ENCODE measurements at regions of chr9 and their contacts with region 1.

Region 1: DNA sequence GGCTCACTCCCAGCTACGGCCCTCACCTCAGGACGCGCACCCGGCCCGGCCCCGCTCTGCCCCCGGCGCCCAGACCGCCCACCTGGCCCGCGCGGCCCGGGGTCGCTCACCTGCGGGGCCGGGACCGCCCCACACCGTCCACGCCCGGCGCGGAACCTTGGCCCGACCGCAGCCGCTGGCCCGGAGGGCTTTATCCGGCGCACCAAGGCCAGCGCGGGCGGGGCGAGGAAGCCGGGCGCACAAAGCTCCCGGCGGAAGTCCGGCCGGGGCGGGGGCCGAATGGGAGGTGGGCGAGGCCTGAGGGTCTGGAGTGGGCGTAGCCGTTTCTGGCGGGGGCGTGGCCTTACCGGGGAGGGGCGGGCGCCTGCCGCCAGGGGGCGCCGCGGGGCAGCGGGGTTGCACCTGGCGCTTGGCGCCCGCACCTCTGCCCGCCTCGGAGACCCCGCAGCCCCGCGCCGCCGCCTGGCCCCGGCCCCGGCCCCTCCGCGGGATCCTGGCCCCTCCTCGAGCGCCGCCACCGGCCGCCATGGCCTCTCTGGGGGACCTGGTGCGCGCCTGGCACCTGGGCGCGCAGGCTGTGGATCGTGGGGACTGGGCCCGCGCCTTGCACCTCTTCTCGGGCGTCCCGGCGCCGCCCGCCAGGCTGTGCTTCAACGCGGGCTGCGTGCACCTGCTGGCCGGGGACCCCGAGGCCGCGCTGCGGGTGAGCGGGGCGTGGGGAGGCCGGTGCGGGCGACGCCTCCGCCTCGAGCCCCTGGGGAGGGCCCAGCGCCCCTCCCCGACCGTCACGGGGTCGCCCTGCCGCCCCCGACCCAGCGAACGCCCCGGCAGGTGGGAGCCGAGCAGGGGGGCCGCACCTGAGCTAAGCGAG is at the starts of genes EXD3 and NOXA1:
- DNase-seq: peak; percentile 91 to 97 (median 94)
- ATAC-seq: peak; percentile 89
- H3K4me3 ChIP-seq: peak within 1 kb of the TSS; percentile 65
- H3K4me3 Mint-ChIP-seq: peak within 1 kb of the TSS; percentile 91
- H3K27ac ChIP-seq: no peak within 1 kb of the TSS
- H3K27ac Mint-ChIP-seq: peak within 1 kb of the TSS; percentile 69
- H3K4me1 ChIP-seq: peaks cover 19% of the 10 kb centered on the region
- H3K4me1 Mint-ChIP-seq: peaks cover 18% of the 10 kb centered on the region
- H3K27me3 ChIP-seq: no peaks in the 10 kb centered on the region
- H3K27me3 Mint-ChIP-seq: no peaks in the 10 kb centered on the region
- CTCF ChIP-seq: no peak
- total RNA-seq, gene EXD3: 14.9 to 16.9 TPM
- total RNA-seq, gene NOXA1: 6.7 to 7.7 TPM

Region 2: DNA sequence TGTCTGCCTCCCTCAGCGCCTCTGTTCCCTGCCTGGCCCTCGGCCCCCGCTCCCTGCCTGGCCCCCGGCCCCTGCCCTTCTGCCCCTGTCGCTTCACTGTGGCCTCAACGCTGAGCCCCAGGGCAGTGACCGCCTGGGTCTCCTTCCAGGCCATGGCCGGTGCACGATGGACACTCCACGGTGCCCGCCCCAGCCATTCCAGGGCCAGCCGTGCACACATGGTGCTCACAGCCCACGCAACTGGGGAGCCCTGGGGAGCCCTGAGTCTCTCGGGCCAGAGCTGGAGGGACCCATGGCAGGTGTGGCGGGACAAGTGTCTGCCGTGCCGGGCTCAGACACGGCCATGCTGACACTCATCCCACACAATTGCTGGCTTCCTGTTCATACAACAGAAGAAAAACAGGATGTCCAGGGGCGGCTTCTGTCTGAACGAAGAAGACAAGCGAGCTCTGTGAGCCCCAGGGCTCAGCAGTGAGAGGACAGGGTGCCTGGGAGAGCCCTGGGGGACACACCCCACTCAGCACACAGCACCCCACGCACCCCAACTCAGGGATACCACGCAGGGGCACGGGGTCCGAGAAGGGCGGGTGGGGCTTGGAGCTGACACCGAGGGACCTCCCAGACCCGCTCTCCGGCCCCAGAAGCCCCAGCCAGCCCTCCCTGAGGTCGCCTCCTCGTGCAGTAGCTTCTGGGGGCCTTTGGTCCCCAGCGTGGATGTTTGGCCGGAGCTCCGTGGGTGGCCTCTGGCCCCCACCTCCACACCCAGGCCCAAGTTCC is 35.9 kb before region 1 on chr9:
- CTCF ChIA-PET with region 1: no interaction called
- POLR2A ChIA-PET with region 1: interaction called, 18 read pairs
- intact Hi-C with region 1: no loop called
- DNase-seq: peak in 13 of 14 experiments; percentile 23 to 77 (median 60)
- ATAC-seq: peak; percentile 95
- H3K4me3 ChIP-seq: peak overlapping the region; percentile 26
- H3K4me3 Mint-ChIP-seq: peak overlapping the region; percentile 69
- H3K27ac ChIP-seq: peak overlapping the region; percentile 55 to 69
- H3K27ac Mint-ChIP-seq: peak overlapping the region; percentile 96
- H3K4me1 ChIP-seq: peaks cover 22% of the 10 kb centered on the region
- H3K4me1 Mint-ChIP-seq: peaks cover 13% of the 10 kb centered on the region
- H3K27me3 ChIP-seq: no peaks in the 10 kb centered on the region
- H3K27me3 Mint-ChIP-seq: no peaks in the 10 kb centered on the region
- CTCF ChIP-seq: no peak

Region 3: GRCh38 chr9:137459147-137459600 is 35.9 kb after region 1 on chr9 and contains the start of gene NSMF:
- CTCF ChIA-PET with region 1: interaction called, 4 read pairs
- POLR2A ChIA-PET with region 1: interaction called, 14 read pairs
- intact Hi-C with region 1: loop called in 1 of 2 experiments (anchors 2 kb)
- DNase-seq: peak; percentile 88 to 98 (median 94)
- ATAC-seq: peak; percentile 67
- H3K4me3 ChIP-seq: peak within 1 kb of the TSS; percentile 57
- H3K4me3 Mint-ChIP-seq: peak within 1 kb of the TSS; percentile 77
- H3K27ac ChIP-seq: peak within 1 kb of the TSS; percentile 77 to 79
- H3K27ac Mint-ChIP-seq: peak within 1 kb of the TSS; percentile 95
- H3K4me1 ChIP-seq: peaks cover 86% of the 10 kb centered on the region
- H3K4me1 Mint-ChIP-seq: peaks cover 46% of the 10 kb centered on the region
- H3K27me3 ChIP-seq: no peaks in the 10 kb centered on the region
- H3K27me3 Mint-ChIP-seq: no peaks in the 10 kb centered on the region
- CTCF ChIP-seq: no peak
- total RNA-seq, gene NSMF: 104 to 109 TPM

Region 4: GRCh38 chr9:137578518-137579258 is 155.4 kb after region 1 on chr9 and contains the start of gene DPH7:
- CTCF ChIA-PET with region 1: no interaction called
- POLR2A ChIA-PET with region 1: no interaction called
- intact Hi-C with region 1: loop called in 1 of 2 experiments (anchors 5 kb)
- DNase-seq: peak; percentile 88 to 98 (median 94)
- ATAC-seq: peak; percentile 97
- H3K4me3 ChIP-seq: peak within 1 kb of the TSS; percentile 63
- H3K4me3 Mint-ChIP-seq: peak within 1 kb of the TSS; percentile 87
- H3K27ac ChIP-seq: peak within 1 kb of the TSS in 1 of 2 donors; percentile 39
- H3K27ac Mint-ChIP-seq: peak within 1 kb of the TSS; percentile 71
- H3K4me1 ChIP-seq: peaks cover 36% of the 10 kb centered on the region
- H3K4me1 Mint-ChIP-seq: peaks cover 30% of the 10 kb centered on the region
- H3K27me3 ChIP-seq: no peaks in the 10 kb centered on the region
- H3K27me3 Mint-ChIP-seq: no peaks in the 10 kb centered on the region
- CTCF ChIP-seq: peak; percentile 94
- total RNA-seq, gene DPH7: 36.4 to 36.8 TPM

Measured in CD4-positive, alpha-beta T cell (primary cell).